Activated naive CD4-positive, alpha-beta T cell treated with anti-CD3 and anti-CD28 coated beads for 36 hours (primary cell): ENCODE measurements at regions of chr6 and their contacts with region 1.

Region 1: DNA sequence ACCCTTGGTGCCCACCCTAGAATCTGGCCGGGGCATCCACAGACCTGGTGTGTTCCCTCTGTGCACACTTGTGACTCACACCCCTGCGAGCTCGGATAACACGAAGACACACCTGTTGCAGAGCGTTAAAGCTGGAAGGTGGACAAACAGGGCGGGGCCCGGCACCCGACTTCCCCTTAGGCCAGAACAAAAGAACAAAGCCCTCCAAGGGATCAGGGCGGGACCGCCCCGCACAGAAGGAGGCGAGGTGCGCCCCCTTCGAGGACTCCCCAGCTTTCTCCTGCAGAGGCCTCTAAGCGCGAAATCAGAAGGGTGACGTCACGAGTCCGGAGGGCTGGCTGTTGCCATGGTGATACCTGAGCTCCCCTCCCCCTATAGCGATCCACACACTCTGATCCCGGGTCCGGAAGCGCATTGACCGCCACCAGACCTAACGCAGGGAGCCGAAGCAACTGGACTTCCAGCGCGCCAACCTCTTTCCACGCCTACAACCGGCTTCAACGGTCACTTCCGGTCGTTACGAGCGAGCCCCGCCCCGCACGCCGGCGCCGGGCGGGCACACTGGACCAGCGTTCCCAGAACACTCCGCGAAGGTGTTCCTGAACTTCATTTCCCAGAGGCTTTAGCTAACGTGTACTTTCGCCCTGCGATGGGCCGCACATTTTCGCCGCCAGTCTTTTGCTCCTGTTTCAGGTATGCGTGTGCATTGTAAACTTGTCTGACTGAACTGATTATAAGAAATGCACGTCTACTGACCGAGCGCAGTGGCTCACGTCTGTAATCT is at the start of gene ZNF184:
- DNase-seq: peak; percentile 91
- H3K4me3 Mint-ChIP-seq: peak within 1 kb of the TSS; percentile 95
- H3K27ac Mint-ChIP-seq: peak within 1 kb of the TSS; percentile 95
- H3K4me1 Mint-ChIP-seq: peaks cover 45% of the 10 kb centered on the region
- H3K27me3 Mint-ChIP-seq: no peaks in the 10 kb centered on the region
- total RNA-seq, gene ZNF184: 13.0 to 14.3 TPM

Region 2: GRCh38 chr6:26322645-26323482 is 1149.9 kb before region 1 on chr6:
- CTCF ChIA-PET with region 1: no interaction called
- intact Hi-C with region 1: loop called (anchors 10 kb)
- DNase-seq: peak; percentile 74
- H3K4me3 Mint-ChIP-seq: peak overlapping the region; percentile 83
- H3K27ac Mint-ChIP-seq: peak overlapping the region; percentile 89
- H3K4me1 Mint-ChIP-seq: peaks cover 30% of the 10 kb centered on the region
- H3K27me3 Mint-ChIP-seq: peaks cover 30% of the 10 kb centered on the region

Region 3: DNA sequence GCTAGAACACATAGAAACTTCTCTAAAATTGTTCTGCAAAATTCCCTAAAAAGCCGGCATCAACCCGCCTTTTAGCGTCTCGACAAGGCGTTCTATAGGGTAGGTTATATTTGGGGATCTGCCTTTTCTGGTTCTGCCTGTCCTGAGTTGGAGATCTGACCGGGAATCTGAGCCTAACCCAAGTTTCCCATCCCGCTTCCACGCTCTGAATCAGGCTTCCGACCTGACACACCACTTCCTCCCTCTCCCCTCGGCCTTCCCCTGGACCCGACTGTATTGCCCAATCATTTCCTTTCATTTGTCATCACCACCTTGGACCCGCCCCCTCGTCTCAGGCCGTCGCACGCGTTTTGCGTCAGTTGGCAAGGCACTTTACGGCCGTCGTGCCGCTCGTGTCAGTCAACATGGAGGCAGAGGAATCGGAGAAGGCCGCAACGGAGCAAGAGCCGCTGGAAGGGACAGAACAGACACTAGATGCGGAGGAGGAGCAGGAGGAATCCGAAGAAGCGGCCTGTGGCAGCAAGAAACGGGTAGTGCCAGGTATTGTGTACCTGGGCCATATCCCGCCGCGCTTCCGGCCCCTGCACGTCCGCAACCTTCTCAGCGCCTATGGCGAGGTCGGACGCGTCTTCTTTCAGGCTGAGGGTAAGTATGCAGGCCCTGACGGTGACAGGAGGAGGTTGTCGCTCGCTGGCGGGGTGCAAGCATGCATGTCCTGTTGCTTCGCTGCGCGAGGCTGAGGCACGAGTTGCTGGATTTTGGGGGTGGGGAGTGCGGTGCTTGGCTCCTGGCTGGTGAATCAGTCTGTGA is 876.0 kb before region 1 on chr6 and contains the start of gene ABT1:
- CTCF ChIA-PET with region 1: no interaction called
- intact Hi-C with region 1: loop called (anchors 10 kb)
- DNase-seq: peak; percentile 99
- H3K4me3 Mint-ChIP-seq: no peak within 1 kb of the TSS
- H3K27ac Mint-ChIP-seq: no peak within 1 kb of the TSS
- H3K4me1 Mint-ChIP-seq: peaks cover 53% of the 10 kb centered on the region
- H3K27me3 Mint-ChIP-seq: peaks cover 24% of the 10 kb centered on the region
- total RNA-seq, gene ABT1: 17.3 to 18.4 TPM

Region 4: DNA sequence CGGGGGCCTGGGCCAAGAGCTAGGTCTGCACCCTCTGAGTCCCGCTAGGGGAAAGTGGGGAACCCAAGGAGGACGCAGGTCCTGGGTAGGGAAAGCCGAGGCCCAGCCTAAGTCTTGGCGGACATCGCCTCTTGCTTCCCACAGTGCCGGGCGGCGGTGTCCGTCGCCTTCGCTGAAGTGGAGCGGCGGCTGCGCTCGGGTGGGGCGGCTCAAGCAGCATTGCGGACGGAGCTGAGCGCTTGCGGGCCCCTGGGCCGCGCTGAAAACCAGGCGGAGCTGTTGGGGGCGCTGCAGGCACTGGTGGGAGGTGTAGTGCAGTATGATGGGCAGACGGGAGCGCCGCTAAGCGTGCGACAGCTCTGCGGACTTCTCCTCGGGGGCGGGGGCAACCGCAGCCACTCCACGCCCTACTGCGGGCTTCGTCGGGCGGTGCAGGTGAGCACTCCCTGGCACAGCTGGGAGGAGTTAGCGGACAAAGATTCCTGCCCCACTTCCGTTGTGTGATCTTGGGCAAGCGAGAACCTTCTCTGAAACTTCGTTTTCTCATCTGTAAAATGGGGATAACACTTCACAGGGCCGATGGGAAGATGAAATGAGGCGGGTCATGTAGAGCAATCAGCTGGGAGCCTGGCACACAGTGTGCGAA is 221.1 kb before region 1 on chr6:
- CTCF ChIA-PET with region 1: no interaction called
- intact Hi-C with region 1: loop called (anchors 2 kb)
- DNase-seq: peak; percentile 86
- H3K4me3 Mint-ChIP-seq: peak overlapping the region; percentile 89
- H3K27ac Mint-ChIP-seq: no peak overlapping the region
- H3K4me1 Mint-ChIP-seq: peaks cover 9% of the 10 kb centered on the region
- H3K27me3 Mint-ChIP-seq: peaks cover 63% of the 10 kb centered on the region

Region 5: GRCh38 chr6:27460701-27461100 is 12.1 kb before region 1 on chr6:
- CTCF ChIA-PET with region 1: no interaction called
- intact Hi-C with region 1: no loop called
- DNase-seq: no peak
- H3K4me3 Mint-ChIP-seq: no peak overlapping the region
- H3K27ac Mint-ChIP-seq: no peak overlapping the region
- H3K4me1 Mint-ChIP-seq: peaks cover 13% of the 10 kb centered on the region
- H3K27me3 Mint-ChIP-seq: no peaks in the 10 kb centered on the region

Region 6: GRCh38 chr6:27495386-27496135 is 22.8 kb after region 1 on chr6:
- CTCF ChIA-PET with region 1: no interaction called
- intact Hi-C with region 1: loop called (anchors 1 kb)
- DNase-seq: peak; percentile 87
- H3K4me3 Mint-ChIP-seq: peak overlapping the region; percentile 81
- H3K27ac Mint-ChIP-seq: peak overlapping the region; percentile 78
- H3K4me1 Mint-ChIP-seq: peaks cover 14% of the 10 kb centered on the region
- H3K27me3 Mint-ChIP-seq: peaks cover 31% of the 10 kb centered on the region

Region 7: GRCh38 chr6:28080631-28081485 is 608.0 kb after region 1 on chr6:
- CTCF ChIA-PET with region 1: no interaction called
- intact Hi-C with region 1: loop called (anchors 10 kb)
- DNase-seq: peak; percentile 94
- H3K4me3 Mint-ChIP-seq: peak overlapping the region; percentile 97
- H3K27ac Mint-ChIP-seq: peak overlapping the region; percentile 96
- H3K4me1 Mint-ChIP-seq: peaks cover 15% of the 10 kb centered on the region
- H3K27me3 Mint-ChIP-seq: no peaks in the 10 kb centered on the region